K562 (cell line): ENCODE measurements at regions of chr14 and their contacts with region 1.

Region 1: GRCh38 chr14:68862954-68863594 is 70.2 kb upstream of the ZFP36L1 start:
- DNase-seq: peak; percentile 54 to 77 (median 60)
- ATAC-seq: peak; percentile 90
- H3K4me3 ChIP-seq: no peak overlapping the region
- H3K27ac ChIP-seq: no peak overlapping the region
- H3K4me1 ChIP-seq: no peaks in the 10 kb centered on the region; a peak in 2 of 5 replicates
- H3K27me3 ChIP-seq: no peaks in the 10 kb centered on the region
- CTCF ChIP-seq: peak; percentile 66 to 78 (median 75)
- EP300 ChIP-seq: no peak
- POLR2A ChIP-seq: no peak
- RAD21 ChIP-seq: peak; percentile 53 to 73

Region 2: DNA sequence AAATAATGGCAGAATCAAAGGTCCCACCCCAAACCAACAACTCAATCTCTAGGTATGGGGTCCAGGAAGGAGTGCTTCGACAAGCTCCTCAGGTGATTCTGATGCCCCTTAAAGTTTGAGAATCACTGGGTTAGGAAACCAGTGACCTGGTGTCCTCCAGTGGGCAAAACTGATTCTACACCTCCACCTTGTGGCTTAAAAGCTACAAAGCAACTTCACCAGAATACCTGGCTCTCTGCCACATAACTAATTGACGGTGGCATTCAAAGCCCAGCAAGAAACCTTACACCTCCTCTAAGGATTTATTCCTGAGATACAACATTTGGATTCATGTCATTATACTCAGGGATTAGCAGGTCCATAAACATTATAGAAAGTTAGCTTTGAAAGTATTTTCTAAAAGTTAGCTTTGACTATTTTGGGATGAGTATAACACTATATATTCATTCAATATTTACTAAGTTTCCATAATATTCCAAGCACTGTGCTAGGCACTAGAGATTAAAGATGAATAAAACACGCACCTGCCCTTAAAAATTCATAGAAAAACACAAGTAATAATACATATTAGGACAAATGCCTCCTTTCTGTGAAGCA is 244.4 kb after region 1 on chr14:
- CTCF ChIA-PET with region 1: interaction called, 15 read pairs
- POLR2A ChIA-PET with region 1: no interaction called
- in situ Hi-C with region 1: no loop called
- intact Hi-C with region 1: loop called (anchors 1 kb)
- DNase-seq: peak; percentile 14 to 61 (median 26)
- ATAC-seq: peak; percentile 84
- H3K4me3 ChIP-seq: no peak overlapping the region
- H3K27ac ChIP-seq: no peak overlapping the region
- H3K4me1 ChIP-seq: no peaks in the 10 kb centered on the region
- H3K27me3 ChIP-seq: no peaks in the 10 kb centered on the region
- CTCF ChIP-seq: peak; percentile 59 to 74 (median 66); a peak in 5 of 6 replicates
- EP300 ChIP-seq: no peak
- POLR2A ChIP-seq: no peak
- RAD21 ChIP-seq: peak; percentile 21 to 75; a peak in 3 of 4 replicates